A673 (cell line): ENCODE measurements at regions of chr5 and their contacts with region 1.

Region 1: DNA sequence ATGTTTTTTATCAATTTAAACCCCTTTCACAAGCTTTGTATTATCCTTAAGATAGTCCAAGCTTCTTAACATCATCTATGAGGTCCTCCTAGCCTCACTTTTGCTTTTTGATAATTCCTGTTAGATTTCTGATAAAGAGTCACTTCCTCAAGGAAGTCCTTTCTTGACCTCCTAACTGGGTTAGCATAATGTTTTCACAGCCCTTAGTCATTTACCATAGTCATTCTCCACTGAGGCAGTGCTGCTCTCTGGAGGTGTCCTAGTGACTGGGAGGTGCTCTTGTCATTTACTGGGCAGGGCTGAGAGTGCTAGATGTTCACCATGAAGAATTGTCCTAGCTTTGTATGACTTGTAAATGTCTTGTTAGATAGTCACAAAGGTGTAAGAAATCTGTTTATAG is 26.4 kb downstream of the TNPO1 start:
- DNase-seq: peak; percentile 43
- H3K4me3 ChIP-seq: no peak overlapping the region
- H3K27ac ChIP-seq: no peak overlapping the region
- H3K4me1 ChIP-seq: peaks cover 36% of the 10 kb centered on the region
- H3K27me3 ChIP-seq: no peaks in the 10 kb centered on the region
- CTCF ChIP-seq: peak; percentile 18; the same call in 1 of the 2 replicates

Region 2: GRCh38 chr5:72618708-72619107 is 224.1 kb before region 1 on chr5:
- CTCF ChIA-PET with region 1: no interaction called
- POLR2A ChIA-PET with region 1: no interaction called
- intact Hi-C with region 1: loop called (anchors 5 kb)
- DNase-seq: no peak
- H3K4me3 ChIP-seq: no peak overlapping the region
- H3K27ac ChIP-seq: no peak overlapping the region
- H3K4me1 ChIP-seq: no peaks in the 10 kb centered on the region
- H3K27me3 ChIP-seq: no peaks in the 10 kb centered on the region
- CTCF ChIP-seq: no peak

Region 3: GRCh38 chr5:72859127-72859526 is 16.3 kb after region 1 on chr5:
- CTCF ChIA-PET with region 1: no interaction called
- POLR2A ChIA-PET with region 1: no interaction called
- intact Hi-C with region 1: no loop called
- DNase-seq: no peak
- H3K4me3 ChIP-seq: no peak overlapping the region
- H3K27ac ChIP-seq: no peak overlapping the region
- H3K4me1 ChIP-seq: peaks cover 11% of the 10 kb centered on the region
- H3K27me3 ChIP-seq: no peaks in the 10 kb centered on the region
- CTCF ChIP-seq: no peak

Region 4: GRCh38 chr5:72936893-72937292 is 94.1 kb after region 1 on chr5:
- CTCF ChIA-PET with region 1: no interaction called
- POLR2A ChIA-PET with region 1: no interaction called
- intact Hi-C with region 1: no loop called
- DNase-seq: no peak
- H3K4me3 ChIP-seq: no peak overlapping the region
- H3K27ac ChIP-seq: no peak overlapping the region
- H3K4me1 ChIP-seq: no peaks in the 10 kb centered on the region
- H3K27me3 ChIP-seq: no peaks in the 10 kb centered on the region
- CTCF ChIP-seq: no peak